GM13977 (cell line): ENCODE measurements at regions of chr2 and their contacts with region 1.

Region 1: GRCh38 chr2:187168720-187169713 is 279.0 kb downstream of the CALCRL start:
- DNase-seq: peak; percentile 31
- CTCF ChIP-seq: no peak

Region 2: DNA sequence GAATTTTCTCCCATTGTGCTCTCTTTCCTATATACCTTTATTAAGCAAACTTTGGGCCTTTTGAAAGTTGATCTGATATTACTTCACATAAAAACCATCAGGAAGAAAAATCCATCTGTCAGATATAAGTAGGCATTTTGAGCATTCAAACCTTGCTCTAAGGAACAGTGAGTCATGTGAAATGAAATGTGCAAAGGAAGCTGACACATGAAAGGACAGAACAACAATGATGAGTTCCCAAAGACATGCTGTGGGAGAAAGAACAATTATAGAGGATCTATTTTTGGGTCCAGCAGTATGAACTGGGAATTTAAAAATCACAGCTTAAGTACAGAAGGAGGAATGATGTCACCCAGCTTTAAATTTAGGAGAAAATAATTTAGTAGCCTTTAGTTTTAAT is 261.0 kb after region 1 on chr2:
- in situ Hi-C with region 1: loop called (anchors 25 kb)
- DNase-seq: no peak
- CTCF ChIP-seq: no peak

Region 3: DNA sequence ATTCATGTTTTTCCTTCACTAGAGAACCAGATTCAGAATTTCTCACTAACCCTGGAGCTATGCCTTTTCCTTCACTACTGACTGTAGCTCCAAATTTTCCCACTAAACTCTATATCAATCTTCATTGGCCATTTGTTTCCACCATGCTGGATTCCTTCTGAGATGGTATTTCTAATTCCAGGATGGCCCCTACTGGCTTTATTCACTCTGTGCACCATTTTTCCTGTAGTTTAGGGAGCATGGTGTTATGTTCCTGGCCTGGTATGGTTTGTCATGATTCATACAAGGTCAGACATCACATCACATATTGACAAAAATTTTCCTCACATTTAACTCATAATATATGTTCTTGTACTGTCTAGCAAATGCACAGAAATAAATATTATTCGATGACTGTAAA is 614.4 kb after region 1 on chr2:
- in situ Hi-C with region 1: no loop called
- DNase-seq: no peak
- CTCF ChIP-seq: no peak